Natural killer cell (primary cell): ENCODE measurements at regions of chr3 and their contacts with region 1.

Region 1: GRCh38 chr3:9792405-9793160 is at the starts of genes ARPC4 and TADA3:
- DNase-seq: peak; percentile 91 to 96
- ATAC-seq: peak; percentile 84 to 93 (median 84)
- H3K4me3 ChIP-seq: peak within 1 kb of the TSS; percentile 79
- H3K4me3 Mint-ChIP-seq: peak within 1 kb of the TSS; percentile 92
- H3K27ac ChIP-seq: peak within 1 kb of the TSS; percentile 88
- H3K27ac Mint-ChIP-seq: peak within 1 kb of the TSS; percentile 94 to 99
- H3K4me1 ChIP-seq: peaks cover 47% of the 10 kb centered on the region
- H3K4me1 Mint-ChIP-seq: peaks cover 58 to 71% of the 10 kb centered on the region in 2 donors
- H3K27me3 ChIP-seq: no peaks in the 10 kb centered on the region
- H3K27me3 Mint-ChIP-seq: no peaks in the 10 kb centered on the region
- CTCF ChIP-seq: no peak
- total RNA-seq, gene ARPC4: 282 to 288 (median 285) TPM
- total RNA-seq, gene TADA3: 59.2 to 73.7 (median 69.2) TPM

Region 2: GRCh38 chr3:8273479-8273878 is 1519.1 kb before region 1 on chr3:
- intact Hi-C with region 1: no loop called
- DNase-seq: no peak
- ATAC-seq: no peak
- H3K4me3 ChIP-seq: no peak overlapping the region
- H3K4me3 Mint-ChIP-seq: no peak overlapping the region
- H3K27ac ChIP-seq: no peak overlapping the region
- H3K27ac Mint-ChIP-seq: no peak overlapping the region
- H3K4me1 ChIP-seq: no peaks in the 10 kb centered on the region
- H3K4me1 Mint-ChIP-seq: no peaks in the 10 kb centered on the region
- H3K27me3 ChIP-seq: no peaks in the 10 kb centered on the region
- H3K27me3 Mint-ChIP-seq: peaks cover 0 to 6% of the 10 kb centered on the region in 2 donors
- CTCF ChIP-seq: no peak

Region 3: DNA sequence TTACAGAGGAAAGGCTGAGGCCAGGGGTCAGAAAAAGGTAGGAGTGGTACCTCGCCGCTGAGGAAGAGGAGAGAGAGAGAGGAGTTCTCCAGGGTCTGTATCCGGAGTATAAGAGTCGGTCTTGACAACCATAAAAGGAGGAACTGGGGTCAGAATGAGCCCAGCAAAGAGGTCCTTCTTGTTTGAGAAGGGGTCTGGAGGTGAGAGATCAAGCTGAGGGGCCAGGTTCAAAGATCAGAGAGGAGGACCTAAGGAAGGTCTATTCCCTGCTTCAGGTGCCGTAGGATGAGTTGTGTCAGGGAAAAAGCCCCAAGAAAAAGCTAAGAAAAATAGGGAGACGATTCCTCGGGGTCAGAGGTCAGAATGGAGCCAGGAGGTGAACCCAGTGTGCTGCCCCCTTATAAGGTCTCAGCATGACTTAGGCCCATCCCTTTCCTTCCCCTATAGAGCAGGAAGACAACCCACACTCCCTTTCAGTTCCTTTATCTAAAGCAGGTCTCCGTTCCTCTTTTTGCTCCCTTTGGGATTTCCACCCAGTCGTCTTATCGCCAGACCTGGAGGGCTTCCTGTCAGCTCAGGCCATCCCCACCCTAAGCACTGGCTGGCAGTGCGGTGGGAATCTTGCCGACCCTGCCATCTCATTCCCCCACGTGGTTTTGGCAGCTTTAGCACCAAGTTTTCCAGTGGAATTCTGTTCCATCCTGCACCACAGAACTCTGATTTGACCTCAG is 142.6 kb before region 1 on chr3:
- intact Hi-C with region 1: loop called (anchors 1 kb)
- DNase-seq: peak in 1 of 2 donors; percentile 29
- ATAC-seq: peak in 1 of 3 donors; percentile 0
- H3K4me3 ChIP-seq: peak overlapping the region; percentile 85
- H3K4me3 Mint-ChIP-seq: peak overlapping the region; percentile 100
- H3K27ac ChIP-seq: peak overlapping the region; percentile 81
- H3K27ac Mint-ChIP-seq: peak overlapping the region; percentile 90 to 96
- H3K4me1 ChIP-seq: peaks cover 30% of the 10 kb centered on the region
- H3K4me1 Mint-ChIP-seq: peaks cover 26 to 28% of the 10 kb centered on the region in 2 donors
- H3K27me3 ChIP-seq: no peaks in the 10 kb centered on the region
- H3K27me3 Mint-ChIP-seq: no peaks in the 10 kb centered on the region
- CTCF ChIP-seq: no peak

Region 4: DNA sequence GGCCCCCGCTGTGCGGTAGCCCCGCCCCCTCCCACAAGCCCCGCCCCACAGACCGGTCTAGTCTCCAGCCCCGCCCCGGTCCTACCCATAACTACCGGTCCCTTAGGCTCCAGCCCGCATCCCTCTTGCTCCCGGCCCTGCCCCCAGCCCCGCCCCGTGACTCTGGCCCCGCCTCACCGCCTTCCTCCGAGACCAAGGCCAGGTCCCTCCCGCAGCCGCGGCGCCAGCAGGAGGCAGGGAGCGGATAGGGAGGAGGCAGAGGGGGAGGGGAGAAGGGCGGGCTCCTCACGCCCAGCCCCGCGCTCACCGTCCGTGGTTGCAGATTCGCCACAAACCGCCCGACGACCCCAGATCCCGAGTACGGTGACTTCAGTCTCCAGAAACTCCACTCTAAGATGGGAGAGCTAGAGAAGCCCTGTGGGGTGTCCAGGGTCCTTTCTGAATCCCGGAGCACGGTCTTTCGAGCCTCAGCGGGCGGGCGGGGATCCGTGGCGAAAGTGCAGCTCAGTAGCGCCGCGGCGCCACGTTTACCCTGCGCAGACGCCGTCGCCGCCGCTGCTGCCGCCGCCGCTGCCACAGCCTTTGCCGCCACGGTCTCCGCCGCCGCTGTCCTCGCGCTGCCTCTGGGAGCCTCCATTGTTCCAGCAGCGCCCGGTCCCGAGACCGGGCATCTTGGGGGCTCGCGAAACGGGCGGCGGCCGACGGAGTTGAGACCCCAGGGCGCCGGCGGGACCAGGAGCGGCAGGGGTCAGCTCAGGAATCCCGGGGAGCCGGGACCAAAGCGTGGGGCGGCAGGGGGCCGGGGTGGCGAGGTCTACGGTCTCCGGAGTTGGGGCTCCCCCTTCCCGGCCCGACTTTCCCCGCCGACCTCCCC is 61.1 kb before region 1 on chr3 and contains the start of gene BRPF1:
- intact Hi-C with region 1: loop called (anchors 5 kb)
- DNase-seq: peak; percentile 93 to 99
- ATAC-seq: peak; percentile 89 to 96 (median 90)
- H3K4me3 ChIP-seq: peak within 1 kb of the TSS; percentile 96
- H3K4me3 Mint-ChIP-seq: peak within 1 kb of the TSS; percentile 98
- H3K27ac ChIP-seq: peak within 1 kb of the TSS; percentile 96
- H3K27ac Mint-ChIP-seq: peak within 1 kb of the TSS; percentile 93 to 94
- H3K4me1 ChIP-seq: peaks cover 40% of the 10 kb centered on the region
- H3K4me1 Mint-ChIP-seq: peaks cover 49 to 65% of the 10 kb centered on the region in 2 donors
- H3K27me3 ChIP-seq: no peaks in the 10 kb centered on the region
- H3K27me3 Mint-ChIP-seq: no peaks in the 10 kb centered on the region
- CTCF ChIP-seq: no peak
- total RNA-seq, gene BRPF1: 45.1 to 72.1 (median 66.5) TPM

Region 5: GRCh38 chr3:9749645-9750555 is 42.7 kb before region 1 on chr3 and contains the start of gene OGG1:
- intact Hi-C with region 1: loop called (anchors 1 kb)
- DNase-seq: peak; percentile 96 to 97
- ATAC-seq: peak; percentile 89 to 97 (median 95)
- H3K4me3 ChIP-seq: peak within 1 kb of the TSS; percentile 67
- H3K4me3 Mint-ChIP-seq: peak within 1 kb of the TSS; percentile 94
- H3K27ac ChIP-seq: peak within 1 kb of the TSS; percentile 54
- H3K27ac Mint-ChIP-seq: peak within 1 kb of the TSS; percentile 91
- H3K4me1 ChIP-seq: peaks cover 41% of the 10 kb centered on the region
- H3K4me1 Mint-ChIP-seq: peaks cover 49 to 50% of the 10 kb centered on the region in 2 donors
- H3K27me3 ChIP-seq: no peaks in the 10 kb centered on the region
- H3K27me3 Mint-ChIP-seq: no peaks in the 10 kb centered on the region
- CTCF ChIP-seq: no peak
- total RNA-seq, gene OGG1: 33.4 to 52.1 (median 34.7) TPM

Region 6: DNA sequence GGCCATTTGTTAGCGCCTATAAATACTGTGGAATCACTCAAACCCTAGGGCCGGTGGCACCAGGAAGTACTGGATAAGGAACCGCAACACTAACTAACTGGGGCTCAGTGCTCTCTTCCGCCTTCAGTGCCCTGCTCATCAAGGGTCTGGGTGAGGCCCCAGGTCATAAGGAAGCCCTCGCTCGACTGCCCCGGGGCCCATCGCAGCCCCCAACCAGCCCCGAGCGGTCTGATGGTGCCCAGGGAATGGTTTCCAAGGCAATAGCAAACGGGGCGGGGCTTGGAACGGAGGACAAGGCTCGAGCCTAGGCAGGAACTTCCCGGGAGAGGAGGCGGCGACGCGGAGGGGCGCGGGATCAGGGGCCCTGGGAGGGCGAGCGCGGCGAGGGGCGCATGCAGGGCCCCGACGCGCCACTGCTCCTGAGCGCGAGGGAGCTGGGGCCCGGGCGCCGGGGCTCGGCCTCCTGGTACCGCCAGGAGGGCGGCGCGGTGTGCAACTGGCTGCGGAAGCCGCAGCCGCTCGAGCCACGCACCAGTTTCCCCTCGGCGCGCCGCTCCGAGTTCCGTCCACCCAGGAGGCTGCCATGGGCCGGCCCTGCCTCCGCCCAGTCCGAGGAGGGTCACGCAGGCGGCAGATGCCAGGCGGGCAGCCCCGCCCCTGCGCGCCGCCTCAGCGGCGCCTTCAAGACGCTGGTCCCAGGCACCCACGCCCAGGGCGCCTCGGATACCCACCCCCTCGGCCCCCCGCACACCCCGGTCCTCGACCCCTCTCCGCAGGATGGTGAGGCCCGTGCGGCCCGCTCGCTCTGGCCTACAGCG is 17.2 kb after region 1 on chr3 and contains the start of gene TTLL3:
- intact Hi-C with region 1: loop called (anchors 2 kb)
- DNase-seq: peak; percentile 44 to 67
- ATAC-seq: peak; percentile 50 to 79 (median 65)
- H3K4me3 ChIP-seq: peak within 1 kb of the TSS; percentile 58
- H3K4me3 Mint-ChIP-seq: peak within 1 kb of the TSS; percentile 90
- H3K27ac ChIP-seq: peak within 1 kb of the TSS; percentile 90
- H3K27ac Mint-ChIP-seq: peak within 1 kb of the TSS; percentile 93
- H3K4me1 ChIP-seq: peaks cover 31% of the 10 kb centered on the region
- H3K4me1 Mint-ChIP-seq: peaks cover 39 to 58% of the 10 kb centered on the region in 2 donors
- H3K27me3 ChIP-seq: no peaks in the 10 kb centered on the region
- H3K27me3 Mint-ChIP-seq: no peaks in the 10 kb centered on the region
- CTCF ChIP-seq: no peak
- total RNA-seq, gene TTLL3: 133 to 137 (median 136) TPM